Dorsolateral prefrontal cortex (tissue), 120 donors: ENCODE measurements at regions of chr17 and their contacts with region 1.

Region 1: GRCh38 chr17:8138672-8139371 is 13.4 kb downstream of the PER1 start:
- DNase-seq: peak; percentile 84 to 95 (median 91)
- H3K4me3 ChIP-seq: peak overlapping the region in 58 of 59 donors; percentile 1 to 61 (median 42)
- H3K27ac ChIP-seq: peak overlapping the region; percentile 67 to 99 (median 94)
- H3K27me3 ChIP-seq: no peaks in the 10 kb centered on the region
- CTCF ChIP-seq: peak; percentile 83 to 97 (median 91)

Region 2: DNA sequence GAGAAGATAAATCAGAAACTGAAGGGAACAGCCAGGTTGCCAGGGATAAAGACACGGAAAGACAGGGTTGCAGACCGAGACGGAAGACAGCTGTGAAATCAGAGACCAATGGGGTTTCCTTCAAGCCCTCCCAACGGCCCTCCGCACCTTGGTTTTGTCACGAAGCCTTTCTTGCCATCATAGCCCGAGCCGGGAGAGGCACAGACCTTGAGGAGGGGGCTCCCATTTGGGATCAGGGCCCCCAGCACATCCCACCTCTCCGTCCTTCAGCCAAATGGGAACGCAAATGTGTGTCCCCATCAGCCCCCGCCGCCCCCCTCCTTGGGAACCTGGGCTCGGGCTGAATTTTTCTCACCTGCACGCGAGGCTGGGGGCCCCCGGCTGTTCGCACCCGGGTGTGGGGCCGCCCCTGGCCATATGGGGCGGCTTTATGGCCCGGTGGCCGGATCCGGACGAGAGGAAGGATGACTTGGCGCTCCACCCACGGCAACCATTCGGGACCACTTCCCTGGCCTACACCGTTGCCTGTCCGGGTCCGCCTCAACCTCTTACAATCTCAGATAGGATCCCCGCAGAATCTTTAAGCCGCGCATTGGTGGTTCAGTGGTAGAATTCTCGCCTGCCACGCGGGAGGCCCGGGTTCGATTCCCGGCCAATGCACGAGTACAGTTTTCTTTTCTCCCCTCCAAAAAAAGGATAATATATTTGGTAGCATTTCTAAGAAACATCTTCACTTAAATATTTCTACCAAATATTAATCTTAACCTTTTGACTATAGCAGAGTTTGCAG is 13.5 kb before region 1 on chr17:
- intact Hi-C with region 1: loop called (anchors 2 kb)
- DNase-seq: peak; percentile 73 to 93 (median 86)
- H3K4me3 ChIP-seq: peak overlapping the region; percentile 56 to 90 (median 75)
- H3K27ac ChIP-seq: peak overlapping the region in 53 of 59 donors; percentile 44 to 87 (median 75)
- H3K27me3 ChIP-seq: no peaks in the 10 kb centered on the region
- CTCF ChIP-seq: peak in 10 of 56 donors; percentile 8 to 40 (median 21)

Region 3: DNA sequence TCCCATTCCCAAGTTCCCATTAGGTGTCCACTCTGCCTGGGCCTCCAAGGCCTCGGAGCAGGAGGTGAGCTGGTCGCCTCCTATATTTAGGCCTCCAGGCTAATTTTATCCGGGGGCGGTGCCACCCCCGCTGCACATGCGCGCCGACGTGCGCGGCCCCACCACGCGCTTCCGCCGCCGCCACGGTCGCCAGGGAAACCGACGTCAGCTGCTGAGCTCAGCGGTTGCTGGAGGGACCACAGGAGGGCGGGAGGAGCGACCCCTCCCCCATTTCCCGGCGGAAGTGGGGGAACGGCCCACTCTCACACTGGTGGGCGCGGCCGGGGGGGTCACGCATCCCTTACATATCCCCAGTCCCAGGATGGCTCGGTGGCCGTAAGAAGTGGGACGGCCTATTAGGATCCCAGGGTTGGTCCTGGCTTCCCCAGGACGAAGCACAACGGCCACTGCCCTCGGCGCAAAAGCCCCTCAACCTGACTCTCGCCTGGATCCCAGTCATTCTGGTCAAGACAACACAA is 12.4 kb after region 1 on chr17:
- intact Hi-C with region 1: loop called (anchors 1 to 2 kb)
- DNase-seq: peak; percentile 63 to 92 (median 88)
- H3K4me3 ChIP-seq: peak overlapping the region; percentile 61 to 98 (median 88)
- H3K27ac ChIP-seq: peak overlapping the region; percentile 90 to 100 (median 100)
- H3K27me3 ChIP-seq: no peaks in the 10 kb centered on the region
- CTCF ChIP-seq: peak in 10 of 56 donors; percentile 9 to 26 (median 17)

Region 4: DNA sequence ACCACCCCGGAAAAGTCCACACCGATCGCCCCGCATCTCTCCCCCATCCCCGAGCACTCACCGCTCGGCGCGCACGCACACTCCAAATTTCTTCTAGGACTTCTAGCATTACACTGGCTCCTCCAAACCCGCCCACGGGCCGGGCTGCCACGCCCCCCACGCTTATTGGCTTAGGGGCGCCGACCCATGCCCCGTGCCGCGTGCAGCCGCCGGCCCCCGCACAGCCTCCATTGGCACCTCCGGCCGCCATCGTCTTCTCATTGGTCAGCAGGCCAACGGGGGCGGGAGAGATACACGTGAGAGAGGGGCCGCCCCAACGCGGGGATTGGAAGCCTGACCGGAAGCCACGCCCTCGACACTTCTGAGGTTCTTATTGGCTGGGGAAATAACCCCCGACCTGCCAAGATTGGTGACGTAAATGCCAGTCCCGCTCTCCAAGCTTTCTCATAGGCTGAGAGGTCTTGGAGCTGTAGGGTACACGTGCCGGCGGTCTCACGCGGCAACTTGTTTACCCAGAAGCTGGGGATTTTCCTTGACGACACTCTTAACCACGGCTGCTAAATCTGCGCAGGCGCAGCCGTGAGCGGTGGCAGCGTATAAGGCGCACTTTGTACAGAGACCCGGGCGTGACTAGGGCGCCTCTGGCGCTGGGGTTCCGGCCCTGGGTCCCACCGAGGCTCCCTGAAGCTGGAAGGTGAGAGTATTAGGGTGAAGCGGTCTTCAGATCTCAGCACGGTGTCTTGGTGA is 17.6 kb after region 1 on chr17:
- intact Hi-C with region 1: loop called (anchors 1 to 2 kb)
- DNase-seq: peak; percentile 98 to 100 (median 99)
- H3K4me3 ChIP-seq: peak overlapping the region; percentile 60 to 98 (median 87)
- H3K27ac ChIP-seq: peak overlapping the region; percentile 90 to 100 (median 100)
- H3K27me3 ChIP-seq: no peaks in the 10 kb centered on the region
- CTCF ChIP-seq: peak in 36 of 56 donors; percentile 9 to 56 (median 32)

Region 5: GRCh38 chr17:8209909-8210760 is 71.3 kb after region 1 on chr17 and contains the start of gene AURKB:
- intact Hi-C with region 1: no loop called
- DNase-seq: peak; percentile 81 to 95 (median 94)
- H3K4me3 ChIP-seq: peak within 1 kb of the TSS; percentile 30 to 82 (median 65)
- H3K27ac ChIP-seq: peak within 1 kb of the TSS in 33 of 59 donors; percentile 19 to 85 (median 59)
- H3K27me3 ChIP-seq: no peaks in the 10 kb centered on the region
- CTCF ChIP-seq: no peak
- total RNA-seq, gene AURKB: 0.75 to 3.8 (median 1.2) TPM in 12 of 120 experiments, not detected in the others

Region 6: GRCh38 chr17:8222630-8223356 is 84.0 kb after region 1 on chr17:
- intact Hi-C with region 1: loop called (anchors 5 kb)
- DNase-seq: peak; percentile 93 to 97 (median 94)
- H3K4me3 ChIP-seq: peak overlapping the region; percentile 52 to 99 (median 80)
- H3K27ac ChIP-seq: peak overlapping the region; percentile 95 to 100 (median 99)
- H3K27me3 ChIP-seq: no peaks in the 10 kb centered on the region
- CTCF ChIP-seq: peak in 11 of 56 donors; percentile 10 to 57 (median 32)

Region 7: GRCh38 chr17:8268550-8269298 is 129.9 kb after region 1 on chr17:
- intact Hi-C with region 1: no loop called
- DNase-seq: no peak
- H3K4me3 ChIP-seq: no peak overlapping the region
- H3K27ac ChIP-seq: no peak overlapping the region
- H3K27me3 ChIP-seq: no peaks in the 10 kb centered on the region
- CTCF ChIP-seq: no peak

Region 8: DNA sequence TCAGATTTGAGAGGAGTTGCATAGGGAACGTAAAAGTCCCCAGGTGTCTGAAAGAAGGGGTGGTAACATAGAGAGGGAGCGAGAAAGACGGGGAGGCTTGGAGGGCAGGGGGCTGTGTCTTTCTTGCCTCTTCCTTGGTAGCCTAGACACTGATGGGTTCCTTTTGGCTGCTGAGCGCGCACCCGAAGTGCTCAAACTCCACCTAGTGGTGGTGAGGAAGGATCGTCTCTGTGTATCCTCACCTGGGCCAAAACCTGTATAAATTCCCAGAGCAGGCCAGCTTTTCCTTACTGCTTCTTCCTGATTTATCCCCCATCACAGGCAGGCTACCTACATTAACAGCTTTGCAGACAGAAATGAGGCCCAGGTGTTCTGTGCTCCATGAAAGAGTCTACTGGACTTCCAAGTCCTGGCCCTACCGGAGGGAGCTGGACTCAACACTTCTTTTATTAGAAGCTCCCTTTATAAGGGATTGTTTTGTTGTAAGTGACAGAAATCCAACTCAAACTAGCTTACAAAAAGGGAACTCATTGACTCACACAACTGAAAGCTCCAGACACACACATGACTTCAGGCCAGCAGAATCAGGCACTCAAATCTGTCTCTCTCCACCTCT is 161.9 kb after region 1 on chr17:
- intact Hi-C with region 1: loop called in 1 of 2 experiments (anchors 5 kb)
- DNase-seq: peak; percentile 36 to 73 (median 60)
- H3K4me3 ChIP-seq: no peak overlapping the region
- H3K27ac ChIP-seq: peak overlapping the region in 7 of 59 donors; percentile 8 to 53 (median 29)
- H3K27me3 ChIP-seq: no peaks in the 10 kb centered on the region
- CTCF ChIP-seq: peak; percentile 64 to 94 (median 87)